Posterior vena cava (tissue), 2 donors: ENCODE measurements at regions of chr12 and their contacts with region 1.

Region 1: GRCh38 chr12:104596134-104596799 is 139.5 kb downstream of the CHST11 start:
- DNase-seq: no peak

Region 2: GRCh38 chr12:104399740-104400612 is 196.3 kb before region 1 on chr12:
- intact Hi-C with region 1: no loop called
- DNase-seq: no peak

Region 3: DNA sequence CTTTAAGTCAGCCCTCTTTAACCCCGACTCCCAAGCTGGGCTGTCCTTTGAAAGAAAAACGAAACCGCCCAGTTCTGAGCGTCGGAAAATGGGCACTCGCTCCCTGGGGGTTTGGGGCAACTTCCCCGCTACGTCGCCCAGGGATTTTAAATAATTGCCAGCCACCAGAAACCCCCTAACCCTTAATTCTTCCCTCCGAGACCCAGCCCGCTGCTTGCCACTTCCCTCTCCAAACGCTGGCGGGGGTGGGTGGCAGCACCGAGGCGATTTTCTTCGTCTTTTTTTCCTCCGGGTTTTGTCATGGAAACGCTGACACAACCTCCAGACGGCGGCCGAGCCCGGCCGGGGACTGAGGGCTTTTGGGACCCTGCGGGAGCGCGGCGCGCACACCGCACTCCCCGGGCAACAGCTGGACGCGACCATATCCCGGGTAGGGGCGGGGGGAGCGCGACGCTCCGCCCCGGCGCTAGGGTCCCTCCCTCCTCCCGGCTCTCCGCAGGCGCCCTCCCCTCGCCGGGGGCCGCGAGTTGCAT is 139.8 kb before region 1 on chr12 and contains the start of gene CHST11:
- intact Hi-C with region 1: loop called in 1 of 2 experiments (anchors 10 kb)
- DNase-seq: peak; percentile 97
- total RNA-seq, gene CHST11: 17.1 to 17.4 TPM